Caco-2 (cell line): ENCODE measurements at regions of chr1 and their contacts with region 1.

Region 1: DNA sequence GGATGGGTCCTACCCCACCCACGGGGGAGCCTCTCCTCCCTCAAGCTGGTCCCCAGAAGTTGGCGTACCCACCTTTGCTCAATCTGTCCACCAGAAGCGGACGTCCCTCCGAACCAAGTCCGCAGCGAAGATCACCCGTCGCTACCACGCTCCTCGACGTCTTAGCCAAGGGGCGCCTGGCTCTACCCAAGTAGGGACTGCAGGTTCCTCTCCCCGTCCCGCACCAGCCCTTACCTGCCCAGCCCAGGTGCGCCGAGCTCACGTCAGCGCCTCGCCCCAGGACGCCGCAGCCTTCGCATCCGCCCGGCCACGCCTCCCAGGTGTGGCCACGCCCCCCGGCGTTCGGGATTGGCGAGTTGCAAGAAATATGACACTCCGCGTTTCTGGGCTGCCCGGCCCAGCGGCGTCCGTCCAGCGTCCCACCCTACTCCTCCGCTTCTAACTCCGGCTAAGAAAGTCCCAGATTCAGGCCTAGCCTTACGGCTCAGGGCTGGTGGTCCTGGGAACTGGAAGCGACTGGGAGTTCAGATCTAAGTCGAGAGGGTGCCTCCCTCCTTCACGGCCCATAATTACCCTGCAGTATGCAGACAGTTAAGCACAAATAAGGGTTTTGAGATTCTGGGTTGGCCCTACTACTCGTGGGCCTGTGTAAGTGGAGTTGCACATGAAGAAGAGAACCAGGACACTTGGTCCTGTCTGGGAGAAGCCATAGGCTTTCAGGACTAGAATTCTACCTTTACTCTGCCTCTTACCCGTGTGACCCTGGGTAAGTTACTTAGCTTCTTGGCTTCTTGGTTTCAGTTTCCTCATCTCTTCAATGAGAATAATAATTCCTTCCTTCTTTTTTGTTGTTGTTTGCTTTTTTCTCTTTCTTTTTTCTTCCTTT is at the start of gene IRF6:
- DNase-seq: peak; percentile 96 to 97
- H3K4me3 ChIP-seq: peak within 1 kb of the TSS; percentile 72
- H3K4me3 Mint-ChIP-seq: peak within 1 kb of the TSS; percentile 97
- H3K27ac Mint-ChIP-seq: peak within 1 kb of the TSS; percentile 97
- H3K4me1 ChIP-seq: peaks cover 5% of the 10 kb centered on the region; the same call in 1 of the 2 replicates
- H3K4me1 Mint-ChIP-seq: peaks cover 22% of the 10 kb centered on the region
- H3K27me3 ChIP-seq: no peaks in the 10 kb centered on the region
- H3K27me3 Mint-ChIP-seq: no peaks in the 10 kb centered on the region
- CTCF ChIP-seq: no peak
- total RNA-seq, gene IRF6: 27.3 and 30.3 TPM in 2 replicates

Region 2: GRCh38 chr1:209784265-209785169 is 21.6 kb before region 1 on chr1 and contains the start of gene C1orf74:
- CTCF ChIA-PET with region 1: no interaction called
- POLR2A ChIA-PET with region 1: interaction called, 21 read pairs
- intact Hi-C with region 1: loop called (anchors 1 kb)
- DNase-seq: peak; percentile 98 to 99
- H3K4me3 ChIP-seq: peak within 1 kb of the TSS; percentile 73
- H3K4me3 Mint-ChIP-seq: peak within 1 kb of the TSS; percentile 90
- H3K27ac Mint-ChIP-seq: peak within 1 kb of the TSS; percentile 96
- H3K4me1 ChIP-seq: peaks cover 31% of the 10 kb centered on the region
- H3K4me1 Mint-ChIP-seq: peaks cover 19% of the 10 kb centered on the region
- H3K27me3 ChIP-seq: no peaks in the 10 kb centered on the region
- H3K27me3 Mint-ChIP-seq: no peaks in the 10 kb centered on the region
- CTCF ChIP-seq: no peak
- total RNA-seq, gene C1orf74: 4.5 TPM in 2 replicates

Region 3: DNA sequence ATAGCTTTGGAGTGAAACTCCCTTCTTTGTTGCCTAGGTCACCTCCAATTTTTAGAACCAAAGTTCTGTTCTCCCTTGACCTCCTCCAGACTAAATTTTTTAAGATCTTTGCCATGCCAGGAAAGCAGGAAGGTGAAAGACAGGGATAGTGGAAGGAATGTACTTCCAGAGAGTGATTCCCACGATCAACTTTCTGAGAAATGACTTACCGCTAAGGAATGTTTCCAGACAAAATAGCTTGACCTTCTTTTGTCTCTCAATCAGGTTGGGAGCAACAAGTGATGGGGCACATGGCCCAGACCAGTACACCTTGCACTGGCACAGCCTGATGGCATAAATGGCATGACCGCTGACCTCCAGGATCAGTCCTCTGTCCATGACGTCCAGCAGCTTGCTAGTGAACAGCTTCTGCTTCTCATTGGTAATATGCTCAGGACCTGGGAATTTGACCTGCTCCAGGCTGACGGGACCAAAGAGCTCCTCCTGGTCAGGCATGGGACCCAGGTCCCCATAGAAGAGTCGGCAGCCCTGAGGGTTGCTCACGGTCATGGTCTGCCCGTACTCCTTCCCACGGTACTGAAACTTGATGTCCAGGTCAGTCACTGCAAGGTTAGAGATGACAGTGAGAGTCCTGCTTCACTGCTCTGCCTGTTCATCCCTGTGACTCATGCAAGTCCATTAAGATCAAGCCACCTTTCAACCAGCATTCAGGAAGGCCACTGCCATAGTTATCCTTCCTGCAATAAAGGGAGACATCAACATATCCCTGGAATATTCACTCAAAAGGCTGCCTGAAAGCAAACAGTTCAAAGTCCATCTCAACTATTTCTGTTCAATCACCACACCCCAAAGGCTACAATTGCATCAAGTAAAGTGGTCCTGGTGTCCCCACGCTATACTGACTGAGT is 15.6 kb before region 1 on chr1:
- CTCF ChIA-PET with region 1: interaction called, 4 read pairs
- POLR2A ChIA-PET with region 1: interaction called, 12 read pairs
- intact Hi-C with region 1: no loop called
- DNase-seq: peak; percentile 39 to 63
- H3K4me3 ChIP-seq: no peak overlapping the region
- H3K4me3 Mint-ChIP-seq: peak overlapping the region; percentile 51
- H3K27ac Mint-ChIP-seq: peak overlapping the region; percentile 92
- H3K4me1 ChIP-seq: peaks cover 21% of the 10 kb centered on the region
- H3K4me1 Mint-ChIP-seq: peaks cover 17% of the 10 kb centered on the region
- H3K27me3 ChIP-seq: no peaks in the 10 kb centered on the region
- H3K27me3 Mint-ChIP-seq: no peaks in the 10 kb centered on the region
- CTCF ChIP-seq: no peak

Region 4: DNA sequence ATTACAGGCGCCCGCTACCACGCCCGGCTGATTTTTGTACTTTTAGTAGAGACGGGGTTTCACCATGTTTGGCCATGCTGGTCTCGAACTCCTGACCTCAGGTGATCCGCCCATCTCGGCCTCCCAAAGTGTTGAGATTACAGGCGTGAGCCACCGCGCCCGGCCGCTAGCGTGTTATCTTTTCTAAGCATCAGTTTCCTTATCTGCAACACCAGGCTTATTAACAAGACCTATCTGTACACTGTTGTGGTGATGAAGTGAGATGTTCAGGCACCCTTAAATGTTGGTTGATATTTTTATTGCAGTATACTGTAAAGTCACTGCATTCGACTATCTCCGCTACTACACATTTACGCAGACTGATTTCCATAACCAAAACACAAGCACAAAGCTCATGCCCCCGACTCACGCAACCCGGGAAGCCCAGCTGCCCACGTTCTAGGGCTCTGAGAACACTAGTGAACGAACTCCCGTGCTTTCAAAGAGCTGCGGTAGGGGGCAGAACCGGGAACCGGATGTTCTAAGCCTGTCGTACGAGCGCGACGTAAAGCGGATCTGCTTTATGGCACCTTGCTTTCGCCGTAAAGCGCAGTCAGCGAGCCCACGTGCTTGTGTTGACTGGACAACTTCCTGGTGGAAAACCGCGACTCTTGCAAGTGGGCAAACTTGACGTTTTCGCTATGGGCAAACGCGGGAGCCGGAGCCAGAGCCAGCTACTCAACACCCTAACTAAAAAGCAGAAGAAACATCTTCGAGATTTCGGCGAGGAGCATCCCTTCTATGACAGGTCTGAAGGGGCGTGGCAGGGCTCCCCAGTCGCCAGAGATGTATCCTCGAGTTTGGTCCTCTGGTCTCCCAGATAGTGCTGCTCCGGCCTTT is 21.5 kb after region 1 on chr1 and contains the start of gene UTP25:
- CTCF ChIA-PET with region 1: interaction called, 16 read pairs
- POLR2A ChIA-PET with region 1: interaction called, 20 read pairs
- intact Hi-C with region 1: loop called (anchors 1 kb)
- DNase-seq: peak; percentile 94 to 96
- H3K4me3 ChIP-seq: peak within 1 kb of the TSS; percentile 92
- H3K4me3 Mint-ChIP-seq: peak within 1 kb of the TSS; percentile 83
- H3K27ac Mint-ChIP-seq: peak within 1 kb of the TSS; percentile 94
- H3K4me1 ChIP-seq: peaks cover 17% of the 10 kb centered on the region
- H3K4me1 Mint-ChIP-seq: peaks cover 29% of the 10 kb centered on the region
- H3K27me3 ChIP-seq: no peaks in the 10 kb centered on the region
- H3K27me3 Mint-ChIP-seq: peaks cover 2% of the 10 kb centered on the region
- CTCF ChIP-seq: peak; percentile 61 to 83
- total RNA-seq, gene UTP25: 9.5 and 9.8 TPM in 2 replicates